ENCODE measurements at regions of chr13 and their contacts with region 1.

Region 1: DNA sequence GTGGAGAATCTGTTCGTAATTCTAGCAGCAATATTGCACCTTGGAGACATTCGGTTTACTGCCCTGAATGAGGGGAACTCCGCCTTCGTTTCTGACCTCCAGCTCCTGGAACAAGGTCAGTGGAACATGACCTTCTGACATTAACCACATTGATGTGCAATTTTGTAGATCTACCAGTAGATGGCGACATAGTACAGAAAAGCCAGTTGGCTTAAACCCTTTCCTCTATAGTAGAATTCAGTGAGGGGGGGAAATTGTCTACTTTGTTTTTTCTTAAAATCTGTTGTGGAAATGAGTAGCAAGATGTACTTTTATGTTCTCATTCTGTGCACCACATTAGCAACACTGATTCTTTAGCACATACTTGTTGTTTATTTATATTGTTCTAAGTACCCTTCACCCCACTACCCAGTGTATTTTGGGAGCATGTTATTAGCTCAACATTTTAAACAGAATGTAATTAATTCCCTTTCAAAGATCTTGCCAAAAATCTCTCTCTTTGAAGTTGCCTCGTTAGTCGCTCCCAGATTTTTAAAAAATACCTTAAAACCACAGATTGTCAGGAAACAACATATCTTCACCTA is 332.2 kb downstream of the MYO16 start:
- DNase-seq: no peak
- ATAC-seq: peak; percentile 87

Region 2: DNA sequence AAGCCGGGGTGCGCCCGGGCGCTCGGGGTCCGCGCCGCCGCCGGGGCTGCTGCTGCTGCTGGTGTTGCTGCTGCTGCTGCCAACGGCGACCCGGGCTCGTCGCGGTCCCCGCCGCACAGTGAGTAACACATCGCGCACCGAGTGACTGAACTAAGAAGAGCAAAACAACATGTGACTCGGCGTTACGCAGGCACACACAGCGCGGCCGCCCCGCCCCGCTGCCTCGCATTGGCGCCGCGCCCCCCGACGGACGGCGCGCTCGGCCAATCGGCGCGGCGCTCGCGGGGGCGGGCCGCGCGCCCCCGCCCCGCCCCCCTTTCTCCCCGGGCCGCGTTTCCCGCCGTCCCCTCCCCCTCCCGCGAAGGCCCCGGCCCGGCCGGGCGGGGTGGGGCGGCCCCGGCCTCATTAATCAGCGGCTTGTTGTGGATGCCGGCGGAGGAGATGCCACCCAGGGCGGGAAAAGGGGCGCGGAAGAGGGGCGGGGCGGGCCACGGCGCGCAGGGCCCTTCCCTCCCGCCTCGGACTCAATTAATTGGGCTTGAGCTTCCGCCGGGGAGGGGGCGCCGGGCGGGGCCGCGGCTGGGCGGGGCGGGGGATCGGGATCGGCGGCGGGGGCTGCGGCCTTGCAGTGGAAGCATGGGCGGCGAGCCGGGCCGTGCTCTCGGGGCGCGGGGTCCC is 825.0 kb after region 1 on chr13 and contains the start of gene IRS2:
- intact Hi-C with region 1: loop called (anchors 10 kb)
- DNase-seq: peak; percentile 95
- ATAC-seq: peak; percentile 76
- total RNA-seq, gene IRS2: 11.3 TPM

Measured in left ventricle myocardium superior (tissue), 1 donor.